ENCODE measurements at regions of chr2 and their contacts with region 1.

Region 1: GRCh38 chr2:68751397-68752339 is 17.1 kb downstream of the ARHGAP25 start:
- DNase-seq: peak; percentile 79
- ATAC-seq: peak; percentile 92
- H3K4me3 Mint-ChIP-seq: peak overlapping the region; percentile 62
- H3K27ac Mint-ChIP-seq: peak overlapping the region; percentile 92
- H3K4me1 Mint-ChIP-seq: peaks cover 83% of the 10 kb centered on the region
- H3K27me3 Mint-ChIP-seq: no peaks in the 10 kb centered on the region
- CTCF ChIP-seq: peak; percentile 67

Region 2: DNA sequence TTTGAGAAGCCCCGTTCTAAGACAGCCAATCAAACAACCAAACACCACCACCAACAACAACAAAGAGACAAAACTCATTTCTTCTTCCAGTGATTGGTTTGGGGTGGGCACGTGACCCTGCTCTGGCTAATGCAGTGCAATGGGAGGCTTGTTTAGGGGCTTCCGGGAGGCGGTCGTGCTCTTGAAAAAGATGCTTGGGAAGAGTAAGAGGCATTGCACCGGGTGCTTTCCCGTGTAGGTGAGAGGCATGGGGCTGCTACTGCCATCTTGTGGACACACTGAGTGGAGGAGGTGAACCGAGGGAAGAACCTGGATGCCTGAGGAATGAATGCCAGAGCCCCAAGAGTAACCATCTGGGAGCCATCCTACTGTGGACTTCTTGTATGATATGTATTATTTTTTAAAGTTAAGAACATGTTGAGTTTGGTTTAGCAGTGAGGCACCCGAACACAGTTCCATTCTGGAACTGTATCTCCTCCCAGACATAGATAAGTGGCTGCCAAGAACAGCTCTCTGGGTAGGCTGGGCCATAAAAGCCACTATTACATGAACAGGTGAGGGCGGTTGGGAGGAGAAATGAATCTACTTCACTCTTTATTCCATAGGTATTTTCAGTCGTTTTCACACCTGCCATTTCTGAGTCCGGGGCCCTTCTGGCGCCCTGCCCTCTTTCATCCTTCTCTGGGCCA is 36.2 kb before region 1 on chr2:
- CTCF ChIA-PET with region 1: interaction called, 74 read pairs
- POLR2A ChIA-PET with region 1: interaction called, 74 read pairs
- intact Hi-C with region 1: no loop called
- DNase-seq: no peak
- ATAC-seq: peak; percentile 51
- H3K4me3 Mint-ChIP-seq: peak overlapping the region; percentile 21
- H3K27ac Mint-ChIP-seq: peak overlapping the region; percentile 89
- H3K4me1 Mint-ChIP-seq: peaks cover 82% of the 10 kb centered on the region
- H3K27me3 Mint-ChIP-seq: no peaks in the 10 kb centered on the region
- CTCF ChIP-seq: no peak

Region 3: GRCh38 chr2:68766376-68766845 is 14.7 kb after region 1 on chr2:
- CTCF ChIA-PET with region 1: interaction called, 29 read pairs
- POLR2A ChIA-PET with region 1: interaction called, 57 read pairs
- intact Hi-C with region 1: loop called (anchors 1 kb)
- DNase-seq: no peak
- ATAC-seq: peak; percentile 41
- H3K4me3 Mint-ChIP-seq: peak overlapping the region; percentile 67
- H3K27ac Mint-ChIP-seq: peak overlapping the region; percentile 96
- H3K4me1 Mint-ChIP-seq: peaks cover 98% of the 10 kb centered on the region
- H3K27me3 Mint-ChIP-seq: no peaks in the 10 kb centered on the region
- CTCF ChIP-seq: no peak

Region 4: DNA sequence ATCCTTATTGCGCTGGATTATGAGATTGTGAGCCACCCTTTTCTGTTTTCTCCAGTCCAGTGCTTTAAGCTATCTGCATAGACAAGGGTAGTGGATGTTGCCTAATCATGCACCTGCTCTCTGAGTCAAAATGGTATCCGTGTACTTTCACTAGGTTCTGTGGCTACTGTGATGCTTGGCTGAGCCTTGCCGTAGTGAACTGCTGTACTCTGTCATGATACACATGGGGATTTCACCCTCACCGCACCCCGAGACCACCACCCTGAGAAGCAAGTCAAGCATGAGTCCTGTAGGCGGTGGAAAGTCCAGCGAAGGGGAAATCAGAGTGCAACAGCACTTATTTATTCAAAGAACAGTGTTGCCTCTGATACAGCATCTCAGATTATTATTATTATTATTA is 37.9 kb after region 1 on chr2:
- CTCF ChIA-PET with region 1: interaction called, 47 read pairs
- POLR2A ChIA-PET with region 1: interaction called, 103 read pairs
- intact Hi-C with region 1: loop called (anchors 1 kb)
- DNase-seq: peak; percentile 75
- ATAC-seq: peak; percentile 87
- H3K4me3 Mint-ChIP-seq: peak overlapping the region; percentile 61
- H3K27ac Mint-ChIP-seq: no peak overlapping the region
- H3K4me1 Mint-ChIP-seq: peaks cover 47% of the 10 kb centered on the region
- H3K27me3 Mint-ChIP-seq: no peaks in the 10 kb centered on the region
- CTCF ChIP-seq: no peak

Region 5: DNA sequence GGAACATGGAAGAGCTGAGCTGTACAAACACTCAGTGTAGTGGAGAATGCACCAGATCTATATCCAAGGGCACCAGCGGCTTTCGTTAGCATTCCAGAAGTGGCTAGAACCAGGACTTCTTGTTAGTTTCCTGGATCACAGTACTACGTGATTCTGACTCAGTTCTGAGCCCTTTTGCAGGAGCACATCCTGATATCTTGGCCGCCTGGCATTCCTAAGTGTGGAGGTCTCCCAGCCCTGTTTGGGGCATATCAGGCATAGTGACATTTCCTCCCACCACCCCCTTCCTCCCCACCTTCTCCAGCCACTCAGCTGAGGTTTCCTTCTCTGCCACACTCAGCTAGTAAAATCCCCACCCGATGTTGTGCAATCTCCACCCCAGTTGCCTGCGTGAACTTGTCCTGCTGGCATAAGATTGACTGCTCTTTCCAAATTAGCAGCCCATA is 56.2 kb after region 1 on chr2:
- CTCF ChIA-PET with region 1: interaction called, 13 read pairs
- POLR2A ChIA-PET with region 1: interaction called, 8 read pairs
- intact Hi-C with region 1: loop called (anchors 1 kb)
- DNase-seq: no peak
- ATAC-seq: no peak
- H3K4me3 Mint-ChIP-seq: no peak overlapping the region
- H3K27ac Mint-ChIP-seq: peak overlapping the region; percentile 87
- H3K4me1 Mint-ChIP-seq: peaks cover 64% of the 10 kb centered on the region
- H3K27me3 Mint-ChIP-seq: no peaks in the 10 kb centered on the region
- CTCF ChIP-seq: no peak

Region 6: DNA sequence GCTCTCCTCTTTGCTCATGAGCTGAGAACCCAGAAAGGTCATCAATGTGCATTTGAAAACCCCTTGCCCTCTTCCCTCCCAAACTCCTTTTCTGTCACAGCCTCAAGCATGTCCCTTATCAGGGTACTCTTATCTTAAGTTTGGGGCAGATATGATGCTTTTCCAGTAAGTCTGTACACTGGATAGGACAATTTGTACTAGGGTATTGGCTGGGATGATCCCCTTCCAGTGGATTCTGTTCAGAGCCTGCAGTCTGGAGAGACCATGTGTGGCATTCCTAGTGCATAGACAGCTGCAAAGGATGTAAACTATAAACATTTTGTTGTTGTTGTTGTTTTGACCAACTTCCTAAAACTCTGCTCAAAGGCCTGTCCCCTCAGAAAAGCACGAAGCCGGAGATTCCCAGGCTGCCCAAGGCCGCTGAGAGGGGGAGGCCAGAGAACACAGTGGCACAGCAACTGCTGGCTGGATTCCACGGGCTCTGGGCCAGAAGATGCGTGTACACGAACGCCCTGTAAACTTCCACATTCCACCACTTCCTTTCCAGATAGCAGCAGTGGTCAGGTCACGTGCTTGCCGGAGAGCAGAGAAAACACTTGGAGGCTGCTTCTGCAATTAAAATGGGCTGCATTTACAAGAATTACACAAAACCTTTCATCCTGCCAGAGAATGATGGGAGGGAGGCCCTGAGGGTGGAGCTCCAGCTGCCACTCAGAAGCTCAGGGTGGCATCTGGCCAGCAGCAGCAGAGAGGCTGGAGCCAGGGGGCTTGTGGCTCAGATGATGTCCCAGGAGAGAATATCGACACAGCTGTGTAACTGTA is 77.4 kb after region 1 on chr2:
- CTCF ChIA-PET with region 1: interaction called, 6 read pairs
- POLR2A ChIA-PET with region 1: interaction called, 10 read pairs
- intact Hi-C with region 1: no loop called
- DNase-seq: no peak
- ATAC-seq: peak; percentile 29
- H3K4me3 Mint-ChIP-seq: peak overlapping the region; percentile 8
- H3K27ac Mint-ChIP-seq: peak overlapping the region; percentile 76
- H3K4me1 Mint-ChIP-seq: peaks cover 78% of the 10 kb centered on the region
- H3K27me3 Mint-ChIP-seq: no peaks in the 10 kb centered on the region
- CTCF ChIP-seq: no peak

Region 7: DNA sequence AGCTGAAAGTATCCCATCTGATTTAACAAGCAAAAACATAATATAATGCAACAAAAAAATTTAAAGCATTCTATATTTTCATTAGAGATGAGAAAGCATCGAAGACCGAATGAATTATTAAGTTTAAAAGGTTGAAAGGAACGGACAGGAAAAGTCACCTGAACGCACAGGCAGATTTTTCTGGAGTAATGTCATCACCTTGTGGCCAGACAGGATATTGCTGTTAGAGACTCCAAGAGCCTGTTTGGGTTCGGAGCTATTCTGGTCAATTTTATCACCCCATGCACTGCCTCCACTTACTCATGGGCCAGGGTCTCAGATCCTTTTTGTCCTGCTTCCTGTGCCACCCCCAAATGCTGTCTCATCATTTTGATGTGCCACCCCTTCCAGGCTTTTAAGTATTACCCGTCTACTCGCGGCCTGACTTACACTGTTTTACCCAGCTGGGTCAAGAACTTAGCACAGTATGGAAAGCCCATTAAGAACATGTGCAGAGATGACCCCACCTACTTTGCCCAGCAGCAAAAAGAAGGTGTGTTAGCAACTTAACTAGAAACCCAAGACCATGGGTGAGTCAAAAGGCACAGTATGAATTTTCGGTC is 173.7 kb after region 1 on chr2:
- CTCF ChIA-PET with region 1: interaction called, 18 read pairs
- POLR2A ChIA-PET with region 1: interaction called, 3 read pairs
- intact Hi-C with region 1: loop called (anchors 1 kb)
- DNase-seq: no peak
- ATAC-seq: peak; percentile 83
- H3K4me3 Mint-ChIP-seq: no peak overlapping the region
- H3K27ac Mint-ChIP-seq: no peak overlapping the region
- H3K4me1 Mint-ChIP-seq: peaks cover 3% of the 10 kb centered on the region
- H3K27me3 Mint-ChIP-seq: no peaks in the 10 kb centered on the region
- CTCF ChIP-seq: no peak

Measured in activated B cell treated with CpG ODN at 0.5 μM for 24 hours (primary cell).